ENCODE measurements at regions of chr5 and their contacts with region 1.

Region 1: GRCh38 chr5:44332285-44332971 is 56.8 kb downstream of the FGF10 start:
- DNase-seq: no peak
- ATAC-seq: peak; percentile 54

Region 2: DNA sequence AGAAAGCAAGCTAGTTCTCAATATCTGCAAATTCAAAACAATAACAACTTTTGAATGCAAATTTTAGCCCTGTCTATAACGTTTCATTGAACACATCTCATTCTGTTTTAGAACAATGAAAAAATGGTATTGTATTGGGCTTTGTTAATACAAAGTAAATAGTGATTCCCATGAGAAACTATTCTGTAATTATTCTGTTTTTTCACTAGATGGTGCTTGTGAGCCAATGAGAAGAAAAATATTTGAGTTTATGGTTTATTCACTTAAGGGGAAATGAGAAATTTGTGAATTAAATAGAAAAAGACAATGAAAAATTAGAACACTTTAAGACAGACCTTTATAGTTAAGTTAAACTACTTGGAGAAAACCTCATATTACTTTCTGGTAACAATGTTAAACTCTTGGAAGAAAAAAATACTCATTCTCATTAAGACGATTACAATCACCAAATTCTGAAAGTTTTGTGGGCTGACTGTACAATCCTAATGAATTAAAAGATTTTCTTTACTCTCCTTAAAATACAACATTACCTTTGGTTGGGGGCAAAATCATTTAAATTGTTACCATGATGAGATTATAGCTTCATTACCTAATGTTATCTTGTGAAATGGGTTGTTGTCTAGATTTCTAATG is 602.5 kb before region 1 on chr5:
- intact Hi-C with region 1: loop called (anchors 1 kb)
- DNase-seq: no peak
- ATAC-seq: no peak

Region 3: GRCh38 chr5:44486591-44486990 is 154.2 kb after region 1 on chr5:
- intact Hi-C with region 1: no loop called
- DNase-seq: no peak
- ATAC-seq: no peak

Measured in Right ventricle myocardium inferior (tissue), 1 donor.